Activated CD8-positive, alpha-beta T cell treated with anti-CD3 and anti-CD28 coated beads for 36 hours (primary cell): ENCODE measurements at regions of chr22 and their contacts with region 1.

Region 1: GRCh38 chr22:46035742-46036557 is 59.0 kb upstream of the WNT7B start:
- DNase-seq: peak; percentile 100
- ATAC-seq: peak; percentile 96
- H3K4me3 Mint-ChIP-seq: peak overlapping the region; percentile 80
- H3K27ac Mint-ChIP-seq: peak overlapping the region; percentile 91
- H3K4me1 Mint-ChIP-seq: peaks cover 16% of the 10 kb centered on the region
- H3K27me3 Mint-ChIP-seq: no peaks in the 10 kb centered on the region
- CTCF ChIP-seq: no peak

Region 2: DNA sequence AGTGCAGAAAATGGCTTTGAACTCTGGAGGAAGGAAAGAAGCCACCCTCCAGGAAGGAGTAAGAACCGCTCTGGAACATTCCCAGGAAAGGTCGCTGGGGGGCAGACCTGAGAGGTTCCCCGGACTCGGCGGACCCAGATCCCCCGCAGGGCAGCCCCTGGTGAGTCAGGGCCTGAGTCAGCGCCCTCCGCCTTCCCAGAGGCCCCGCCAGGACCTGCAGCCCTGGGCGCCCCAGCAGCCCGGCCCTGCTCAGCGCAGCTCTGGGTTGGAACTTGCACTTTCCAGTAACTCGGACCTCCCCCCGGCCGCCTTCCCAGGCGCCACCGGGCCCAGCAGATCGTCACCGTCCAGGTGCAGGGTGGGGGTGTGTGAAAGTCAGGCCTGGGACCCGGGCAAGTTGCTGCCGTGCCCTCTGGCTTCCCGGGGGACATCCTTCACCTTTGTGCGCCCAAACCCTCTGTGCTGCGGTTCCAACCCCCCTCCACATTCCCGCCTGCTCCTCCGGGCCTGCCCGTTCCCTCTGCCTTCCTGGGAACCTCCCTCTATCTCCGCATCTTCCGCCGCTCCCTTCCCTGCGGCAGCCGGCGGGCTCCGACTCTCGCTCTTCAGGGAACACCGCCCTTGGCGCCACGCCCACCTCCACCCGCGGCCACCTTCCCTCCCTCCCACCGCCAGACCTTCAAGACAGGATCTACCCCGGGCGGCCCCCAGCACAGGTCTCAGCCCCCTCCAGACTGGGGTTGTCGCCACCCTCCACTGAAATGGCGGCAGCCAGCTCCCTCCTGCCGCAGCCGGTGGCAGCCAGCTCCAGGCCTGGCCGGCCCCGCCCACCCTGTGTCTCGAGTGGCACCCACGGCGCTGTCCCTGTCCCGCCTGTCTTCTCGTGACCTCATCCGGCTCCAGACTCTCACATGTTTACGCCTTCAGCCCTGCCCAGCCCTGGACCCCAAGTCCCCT is 22.2 kb before region 1 on chr22:
- CTCF ChIA-PET with region 1: interaction called, 73 read pairs
- POLR2A ChIA-PET with region 1: interaction called, 6 read pairs
- intact Hi-C with region 1: no loop called
- DNase-seq: peak; percentile 95
- ATAC-seq: peak; percentile 99
- H3K4me3 Mint-ChIP-seq: peak overlapping the region; percentile 76
- H3K27ac Mint-ChIP-seq: peak overlapping the region; percentile 87
- H3K4me1 Mint-ChIP-seq: peaks cover 4% of the 10 kb centered on the region
- H3K27me3 Mint-ChIP-seq: no peaks in the 10 kb centered on the region
- CTCF ChIP-seq: peak; percentile 73

Region 3: GRCh38 chr22:46019351-46019750 is 16.6 kb before region 1 on chr22:
- CTCF ChIA-PET with region 1: interaction called, 37 read pairs
- POLR2A ChIA-PET with region 1: interaction called, 6 read pairs
- intact Hi-C with region 1: no loop called
- DNase-seq: no peak
- ATAC-seq: no peak
- H3K4me3 Mint-ChIP-seq: no peak overlapping the region
- H3K27ac Mint-ChIP-seq: no peak overlapping the region
- H3K4me1 Mint-ChIP-seq: no peaks in the 10 kb centered on the region
- H3K27me3 Mint-ChIP-seq: no peaks in the 10 kb centered on the region
- CTCF ChIP-seq: no peak

Region 4: DNA sequence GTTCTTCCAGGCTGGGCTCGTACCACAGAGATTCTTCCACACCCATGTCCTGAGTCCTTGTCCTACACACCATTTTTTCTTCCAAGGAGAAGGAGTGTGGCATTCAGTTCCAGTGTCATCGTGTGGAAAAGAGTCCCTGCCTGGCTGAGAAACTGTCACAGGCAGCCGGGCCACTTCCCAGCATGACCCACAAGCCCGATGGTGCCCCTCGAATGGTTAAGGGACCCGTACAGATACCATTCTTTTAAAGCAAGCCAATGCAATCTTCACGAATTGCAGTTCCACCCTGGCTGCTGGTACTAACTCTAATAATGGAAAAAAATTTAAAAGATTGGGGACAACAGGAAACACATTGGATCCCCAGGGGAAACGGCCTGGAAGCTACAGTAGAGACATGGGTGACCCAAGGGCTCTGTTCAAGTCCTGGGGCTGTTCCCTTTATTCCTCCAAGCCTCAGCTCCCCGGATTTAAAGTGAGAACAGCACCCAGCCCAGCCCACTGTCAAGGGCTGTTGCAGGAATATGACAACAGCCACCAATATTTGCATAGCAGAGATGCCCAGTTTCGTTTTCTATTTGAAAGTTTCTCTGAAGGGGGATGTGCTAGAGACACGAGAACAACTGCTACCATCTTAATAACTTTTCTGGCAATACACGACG is 21.9 kb after region 1 on chr22:
- CTCF ChIA-PET with region 1: interaction called, 3 read pairs
- POLR2A ChIA-PET with region 1: interaction called, 31 read pairs
- intact Hi-C with region 1: no loop called
- DNase-seq: peak; percentile 50
- ATAC-seq: peak; percentile 75
- H3K4me3 Mint-ChIP-seq: peak overlapping the region; percentile 32
- H3K27ac Mint-ChIP-seq: peak overlapping the region; percentile 81
- H3K4me1 Mint-ChIP-seq: peaks cover 38% of the 10 kb centered on the region
- H3K27me3 Mint-ChIP-seq: peaks cover 4% of the 10 kb centered on the region
- CTCF ChIP-seq: no peak

Region 5: GRCh38 chr22:46127556-46127955 is 91.6 kb after region 1 on chr22:
- CTCF ChIA-PET with region 1: no interaction called
- POLR2A ChIA-PET with region 1: no interaction called
- intact Hi-C with region 1: no loop called
- DNase-seq: no peak
- ATAC-seq: no peak
- H3K4me3 Mint-ChIP-seq: no peak overlapping the region
- H3K27ac Mint-ChIP-seq: no peak overlapping the region
- H3K4me1 Mint-ChIP-seq: no peaks in the 10 kb centered on the region
- H3K27me3 Mint-ChIP-seq: no peaks in the 10 kb centered on the region
- CTCF ChIP-seq: no peak

Region 6: GRCh38 chr22:46335201-46336118 is 299.5 kb after region 1 on chr22 and contains the start of gene TRMU:
- CTCF ChIA-PET with region 1: no interaction called
- POLR2A ChIA-PET with region 1: no interaction called
- intact Hi-C with region 1: no loop called
- DNase-seq: peak; percentile 79
- ATAC-seq: peak; percentile 90
- H3K4me3 Mint-ChIP-seq: peak within 1 kb of the TSS; percentile 98
- H3K27ac Mint-ChIP-seq: peak within 1 kb of the TSS; percentile 92
- H3K4me1 Mint-ChIP-seq: peaks cover 32% of the 10 kb centered on the region
- H3K27me3 Mint-ChIP-seq: no peaks in the 10 kb centered on the region
- CTCF ChIP-seq: no peak
- total RNA-seq, gene TRMU: 87.2 to 98.1 TPM